ENCODE measurements at regions of chr3 and their contacts with region 1.

Region 1: GRCh38 chr3:52536369-52537164 is at the start of gene UQCC5:
- DNase-seq: peak; percentile 97 to 99 (median 98)
- H3K4me3 ChIP-seq: peak within 1 kb of the TSS; percentile 20 to 84 (median 64)
- H3K27ac ChIP-seq: peak within 1 kb of the TSS; percentile 61 to 97 (median 91)
- H3K4me1 ChIP-seq: peaks cover 35 to 74% of the 10 kb centered on the region in 2 donors
- H3K27me3 ChIP-seq: no peaks in the 10 kb centered on the region
- CTCF ChIP-seq: no peak
- POLR2A ChIP-seq: peak; percentile 98 to 100
- total RNA-seq, gene UQCC5: 1.1 to 114 (median 71.2) TPM

Region 2: DNA sequence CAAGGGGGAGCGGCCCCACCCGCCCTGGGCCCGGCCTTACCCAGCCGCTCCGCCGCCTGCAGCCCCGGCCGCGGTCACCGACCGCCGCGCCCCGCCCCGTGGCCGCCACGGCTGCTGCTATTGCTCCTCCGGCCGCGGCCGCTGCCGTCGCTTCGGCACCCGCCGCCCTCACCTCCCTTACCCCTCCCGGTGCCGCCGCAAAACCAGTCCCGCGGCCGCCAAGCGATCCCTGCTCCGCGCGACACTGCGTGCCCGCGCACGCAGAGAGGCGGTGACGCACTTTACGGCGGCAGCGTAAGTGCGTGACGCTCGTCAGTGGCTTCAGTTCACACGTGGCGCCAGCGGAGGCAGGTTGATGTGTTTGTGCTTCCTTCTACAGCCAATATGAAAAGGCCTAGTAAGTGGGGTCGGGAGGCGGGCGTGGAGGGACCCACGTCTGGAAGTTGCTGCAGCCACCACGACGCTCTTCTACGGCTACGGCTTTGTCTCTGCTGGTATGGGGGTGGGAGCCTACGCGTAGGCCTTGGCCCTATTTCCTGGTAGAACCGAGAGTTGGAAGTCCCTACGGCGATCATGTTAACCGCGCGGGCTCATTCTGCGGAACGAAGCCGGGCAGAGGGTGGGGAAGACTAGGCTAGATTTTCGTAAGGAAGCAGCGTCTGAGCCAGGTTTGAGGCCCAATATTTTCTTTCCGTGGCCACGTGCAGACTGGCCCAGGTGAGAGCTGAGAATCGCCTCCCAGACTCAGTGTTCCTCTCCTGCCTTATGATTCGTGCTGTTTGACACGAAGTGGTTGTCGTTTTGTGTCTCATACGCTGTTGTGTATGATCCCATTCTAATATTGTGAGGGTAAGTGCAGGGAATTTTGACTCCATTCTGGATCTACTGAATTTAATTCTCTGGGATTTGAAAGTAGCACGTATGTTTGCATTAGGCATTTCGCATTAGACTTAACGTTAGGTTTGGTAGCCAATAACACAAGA is 149.4 kb after region 1 on chr3 and contains the starts of genes GNL3 and PBRM1:
- intact Hi-C with region 1: loop called in 1 of 2 experiments (anchors 10 kb)
- DNase-seq: peak; percentile 93 to 96 (median 93)
- H3K4me3 ChIP-seq: peak within 1 kb of the TSS; percentile 46 to 94 (median 64)
- H3K27ac ChIP-seq: peak within 1 kb of the TSS; percentile 75 to 100 (median 96)
- H3K4me1 ChIP-seq: peaks cover 37 to 48% of the 10 kb centered on the region in 2 donors
- H3K27me3 ChIP-seq: no peaks in the 10 kb centered on the region
- CTCF ChIP-seq: no peak
- POLR2A ChIP-seq: peak in 1 of 2 donors; percentile 79
- total RNA-seq, gene GNL3: 23.5 to 87.0 (median 54.2) TPM
- total RNA-seq, gene PBRM1: 32.9 to 108 (median 48.8) TPM